ENCODE measurements at regions of chr1 and their contacts with region 1.

Region 1: GRCh38 chr1:112715264-112716053 is at the start of gene PPM1J:
- DNase-seq: peak; percentile 60
- ATAC-seq: peak; percentile 87
- H3K4me3 ChIP-seq: peak within 1 kb of the TSS; percentile 79
- H3K27ac ChIP-seq: no peak within 1 kb of the TSS
- H3K4me1 ChIP-seq: peaks cover 22% of the 10 kb centered on the region
- H3K27me3 ChIP-seq: peaks cover 0 to 3% of the 10 kb centered on the region in 2 experiments; a peak in 1 of 4 replicates
- CTCF ChIP-seq: no peak
- EP300 ChIP-seq: no peak
- POLR2A ChIP-seq: no peak
- RAD21 ChIP-seq: no peak
- polyA plus RNA-seq, gene PPM1J: 0.07 TPM in 1 of 2 experiments, not detected in the other

Region 2: GRCh38 chr1:112395821-112396652 is 319.4 kb before region 1 on chr1 and contains the start of gene CTTNBP2NL:
- CTCF ChIA-PET with region 1: interaction called, 122 read pairs
- POLR2A ChIA-PET with region 1: interaction called, 6 read pairs
- RAD21 ChIA-PET with region 1: interaction called, 53 read pairs
- SMC1A ChIA-PET with region 1: interaction called, 47 read pairs
- in situ Hi-C with region 1: no loop called
- intact Hi-C with region 1: loop called (anchors 2 kb)
- DNase-seq: no peak
- ATAC-seq: peak; percentile 85
- H3K4me3 ChIP-seq: peak within 1 kb of the TSS; percentile 97
- H3K27ac ChIP-seq: peak within 1 kb of the TSS; percentile 78
- H3K4me1 ChIP-seq: peaks cover 18% of the 10 kb centered on the region
- H3K27me3 ChIP-seq: no peaks in the 10 kb centered on the region
- CTCF ChIP-seq: no peak
- EP300 ChIP-seq: no peak
- POLR2A ChIP-seq: peak; percentile 28; the same call in 1 of the 2 replicates
- RAD21 ChIP-seq: no peak
- polyA plus RNA-seq, gene CTTNBP2NL: 2.1 to 5.7 TPM

Region 3: DNA sequence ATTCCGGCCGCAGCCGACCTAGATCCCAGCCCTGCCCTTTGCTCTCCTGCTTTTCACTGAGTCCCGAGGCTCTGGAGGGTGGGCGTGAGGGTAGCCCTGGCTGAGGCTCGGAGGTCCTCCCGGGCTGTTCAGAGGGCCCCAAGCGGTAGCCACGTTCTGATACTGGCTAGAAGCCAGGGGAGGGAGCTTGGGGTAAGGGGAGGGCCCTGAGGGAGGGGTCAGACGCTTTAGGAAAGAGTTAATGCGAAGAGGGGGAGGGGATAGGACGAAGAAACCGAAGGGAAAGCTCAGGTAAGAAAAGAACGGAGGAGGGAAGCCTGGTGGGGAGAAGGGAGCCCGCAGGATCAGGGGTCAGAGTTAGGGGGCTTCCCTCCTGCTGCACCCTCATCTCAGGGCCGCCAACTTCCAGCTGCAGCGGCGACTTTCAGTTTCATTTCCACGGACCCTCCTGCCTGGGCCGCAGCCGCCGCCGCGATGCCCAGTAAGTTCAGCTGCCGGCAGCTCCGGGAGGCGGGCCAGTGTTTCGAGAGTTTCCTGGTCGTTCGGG is 40.9 kb before region 1 on chr1 and contains the start of gene MOV10:
- CTCF ChIA-PET with region 1: interaction called, 13 read pairs
- POLR2A ChIA-PET with region 1: interaction called, 3 read pairs
- RAD21 ChIA-PET with region 1: interaction called, 13 read pairs
- SMC1A ChIA-PET with region 1: interaction called, 6 read pairs
- in situ Hi-C with region 1: no loop called
- intact Hi-C with region 1: no loop called
- DNase-seq: peak; percentile 40
- ATAC-seq: peak; percentile 81
- H3K4me3 ChIP-seq: peak within 1 kb of the TSS; percentile 86
- H3K27ac ChIP-seq: peak within 1 kb of the TSS; percentile 81
- H3K4me1 ChIP-seq: peaks cover 9% of the 10 kb centered on the region
- H3K27me3 ChIP-seq: no peaks in the 10 kb centered on the region
- CTCF ChIP-seq: no peak
- EP300 ChIP-seq: 0 out of 4 replicates have a peak, but pooled peaks of 1 of the 2 experiments have one; percentile 16
- POLR2A ChIP-seq: peak; percentile 74
- RAD21 ChIP-seq: no peak
- polyA plus RNA-seq, gene MOV10: 21.0 to 28.6 TPM

Region 4: GRCh38 chr1:112735752-112736151 is 20.3 kb after region 1 on chr1:
- CTCF ChIA-PET with region 1: interaction called, 33 read pairs
- POLR2A ChIA-PET with region 1: no interaction called
- RAD21 ChIA-PET with region 1: no interaction called
- SMC1A ChIA-PET with region 1: interaction called, 4 read pairs
- in situ Hi-C with region 1: no loop called
- intact Hi-C with region 1: no loop called
- DNase-seq: no peak
- ATAC-seq: no peak
- H3K4me3 ChIP-seq: no peak overlapping the region
- H3K27ac ChIP-seq: no peak overlapping the region
- H3K4me1 ChIP-seq: no peaks in the 10 kb centered on the region
- H3K27me3 ChIP-seq: no peaks in the 10 kb centered on the region; a peak in 1 of 4 replicates
- CTCF ChIP-seq: no peak
- EP300 ChIP-seq: no peak
- POLR2A ChIP-seq: no peak
- RAD21 ChIP-seq: no peak

Region 5: GRCh38 chr1:112809253-112809684 is 93.8 kb after region 1 on chr1:
- CTCF ChIA-PET with region 1: interaction called, 428 read pairs
- POLR2A ChIA-PET with region 1: interaction called, 3 read pairs
- RAD21 ChIA-PET with region 1: interaction called, 192 read pairs
- SMC1A ChIA-PET with region 1: interaction called, 178 read pairs
- in situ Hi-C with region 1: loop called (anchors 5 kb)
- intact Hi-C with region 1: loop called (anchors 1 kb)
- DNase-seq: no peak
- ATAC-seq: peak; percentile 96
- H3K4me3 ChIP-seq: no peak overlapping the region
- H3K27ac ChIP-seq: no peak overlapping the region
- H3K4me1 ChIP-seq: no peaks in the 10 kb centered on the region
- H3K27me3 ChIP-seq: peaks cover 0 to 4% of the 10 kb centered on the region in 2 experiments; a peak in 1 of 4 replicates
- CTCF ChIP-seq: peak; percentile 86 to 96 (median 88)
- EP300 ChIP-seq: no peak
- POLR2A ChIP-seq: no peak
- RAD21 ChIP-seq: peak; percentile 76

Region 6: GRCh38 chr1:113042285-113043143 is 327.1 kb after region 1 on chr1:
- CTCF ChIA-PET with region 1: interaction called, 65 read pairs
- POLR2A ChIA-PET with region 1: interaction called, 6 read pairs
- RAD21 ChIA-PET with region 1: interaction called, 41 read pairs
- SMC1A ChIA-PET with region 1: interaction called, 12 read pairs
- in situ Hi-C with region 1: loop called (anchors 5 kb)
- intact Hi-C with region 1: loop called (anchors 1 kb)
- DNase-seq: no peak
- ATAC-seq: peak; percentile 92
- H3K4me3 ChIP-seq: 0 out of 2 replicates have a peak overlapping the region, but pooled peaks have one; percentile 26
- H3K27ac ChIP-seq: peak overlapping the region; percentile 34; the same call in 1 of the 2 replicates
- H3K4me1 ChIP-seq: peaks cover 29% of the 10 kb centered on the region
- H3K27me3 ChIP-seq: no peaks in the 10 kb centered on the region
- CTCF ChIP-seq: peak; percentile 59 to 85 (median 66); a peak in 5 of 6 replicates
- EP300 ChIP-seq: no peak
- POLR2A ChIP-seq: no peak
- RAD21 ChIP-seq: peak; percentile 90

Region 7: DNA sequence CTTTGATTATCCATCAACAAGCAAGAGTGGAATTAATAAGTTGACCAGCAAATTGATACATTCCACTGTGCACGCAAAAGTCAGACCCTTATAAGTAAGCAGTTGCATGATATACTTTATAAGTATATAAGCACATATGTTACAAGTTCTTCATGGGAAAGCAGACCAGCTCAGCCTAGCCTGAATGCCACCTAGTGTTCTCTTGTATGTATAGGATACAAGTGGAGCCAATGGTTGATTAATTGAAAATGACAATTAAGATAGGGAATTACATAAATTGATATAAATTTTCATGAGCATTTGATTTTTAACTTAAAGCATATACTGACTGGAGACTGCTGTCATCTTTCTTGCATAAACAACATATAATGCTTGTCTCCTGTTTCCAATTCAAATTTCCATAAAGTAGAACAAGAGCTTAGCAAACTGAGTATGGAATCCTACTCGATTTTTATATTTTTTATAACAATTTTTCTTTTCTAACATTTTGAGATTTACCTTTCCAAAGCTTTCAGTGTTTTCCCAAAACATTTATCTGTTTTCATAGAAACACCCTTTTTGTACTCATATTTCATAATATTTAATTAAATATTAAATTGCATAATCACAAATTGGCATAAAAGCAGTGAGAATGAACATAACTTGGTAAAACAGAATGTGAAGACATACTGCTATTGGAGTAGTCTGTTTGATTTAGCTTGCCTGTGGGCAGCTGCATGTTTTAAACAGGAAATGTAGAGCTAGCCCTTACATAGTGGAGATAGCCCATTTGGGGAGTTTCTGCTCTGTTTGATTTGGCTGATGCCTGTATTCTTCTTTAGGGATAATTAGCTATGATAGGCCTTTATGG is 737.7 kb after region 1 on chr1:
- CTCF ChIA-PET with region 1: interaction called, 7 read pairs
- POLR2A ChIA-PET with region 1: no interaction called
- RAD21 ChIA-PET with region 1: no interaction called
- SMC1A ChIA-PET with region 1: no interaction called
- in situ Hi-C with region 1: no loop called
- intact Hi-C with region 1: loop called (anchors 5 kb)
- DNase-seq: no peak
- ATAC-seq: peak; percentile 67; the same call in 2 of the 3 replicates
- H3K4me3 ChIP-seq: no peak overlapping the region
- H3K27ac ChIP-seq: no peak overlapping the region
- H3K4me1 ChIP-seq: no peaks in the 10 kb centered on the region
- H3K27me3 ChIP-seq: no peaks in the 10 kb centered on the region; a peak in 1 of 4 replicates
- CTCF ChIP-seq: peak; percentile 37 to 46 (median 38); a peak in 4 of 6 replicates
- EP300 ChIP-seq: no peak
- POLR2A ChIP-seq: no peak
- RAD21 ChIP-seq: peak; percentile 59